CD4-positive, alpha-beta T cell (primary cell): ENCODE measurements at regions of chr2 and their contacts with region 1.

Region 1: GRCh38 chr2:113050921-113051895 is 1.5 kb downstream of the IL36B start:
- DNase-seq: no peak
- ATAC-seq: no peak
- H3K4me3 ChIP-seq: no peak overlapping the region
- H3K4me3 Mint-ChIP-seq: no peak overlapping the region
- H3K27ac ChIP-seq: no peak overlapping the region
- H3K27ac Mint-ChIP-seq: no peak overlapping the region
- H3K4me1 ChIP-seq: no peaks in the 10 kb centered on the region
- H3K4me1 Mint-ChIP-seq: no peaks in the 10 kb centered on the region
- H3K27me3 ChIP-seq: no peaks in the 10 kb centered on the region
- H3K27me3 Mint-ChIP-seq: no peaks in the 10 kb centered on the region
- CTCF ChIP-seq: no peak

Region 2: GRCh38 chr2:112972423-112973086 is 78.7 kb before region 1 on chr2:
- CTCF ChIA-PET with region 1: no interaction called
- POLR2A ChIA-PET with region 1: no interaction called
- intact Hi-C with region 1: no loop called
- DNase-seq: no peak
- ATAC-seq: no peak
- H3K4me3 ChIP-seq: no peak overlapping the region
- H3K4me3 Mint-ChIP-seq: no peak overlapping the region
- H3K27ac ChIP-seq: no peak overlapping the region
- H3K27ac Mint-ChIP-seq: no peak overlapping the region
- H3K4me1 ChIP-seq: peaks cover 6% of the 10 kb centered on the region
- H3K4me1 Mint-ChIP-seq: peaks cover 19% of the 10 kb centered on the region
- H3K27me3 ChIP-seq: no peaks in the 10 kb centered on the region
- H3K27me3 Mint-ChIP-seq: no peaks in the 10 kb centered on the region
- CTCF ChIP-seq: no peak

Region 3: DNA sequence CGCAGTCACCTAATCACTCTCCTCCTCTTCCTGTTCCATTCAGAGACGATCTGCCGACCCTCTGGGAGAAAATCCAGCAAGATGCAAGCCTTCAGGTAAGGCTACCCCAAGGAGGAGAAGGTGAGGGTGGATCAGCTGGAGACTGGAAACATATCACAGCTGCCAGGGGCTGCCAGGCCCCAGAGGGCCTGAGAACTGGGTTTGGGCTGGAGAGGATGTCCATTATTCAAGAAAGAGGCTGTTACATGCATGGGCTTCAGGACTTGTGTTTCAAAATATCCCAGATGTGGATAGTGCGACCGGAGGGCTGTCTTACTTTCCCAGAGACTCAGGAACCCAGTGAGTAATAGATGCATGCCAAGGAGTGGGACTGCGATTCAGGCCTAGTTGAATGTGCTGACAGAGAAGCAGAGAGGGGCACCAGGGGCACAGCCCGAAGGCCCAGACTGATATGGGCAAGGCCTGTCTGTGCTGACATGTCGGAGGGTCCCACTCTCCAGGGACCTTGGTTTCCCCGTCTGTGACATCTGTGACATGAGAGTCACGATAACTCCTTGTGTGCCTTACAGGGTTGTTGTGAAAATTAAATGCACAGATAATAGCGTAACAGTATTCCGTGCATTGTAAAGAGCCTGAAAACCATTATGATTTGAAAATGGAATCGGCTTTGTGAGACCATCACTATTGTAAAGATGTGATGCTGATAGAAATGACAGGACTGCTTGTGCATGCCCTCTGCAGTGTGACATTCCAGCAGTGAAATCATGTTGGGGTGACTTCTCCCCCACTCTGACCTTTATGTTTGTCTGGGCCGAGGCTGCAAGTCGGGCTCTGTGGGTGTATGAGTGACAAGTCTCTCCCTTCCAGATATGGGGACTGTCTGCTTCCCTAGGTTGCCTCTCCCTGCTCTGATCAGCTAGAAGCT is 76.7 kb after region 1 on chr2:
- CTCF ChIA-PET with region 1: no interaction called
- POLR2A ChIA-PET with region 1: no interaction called
- intact Hi-C with region 1: loop called in 1 of 2 experiments (anchors 2 kb)
- DNase-seq: no peak
- ATAC-seq: no peak
- H3K4me3 ChIP-seq: peak overlapping the region; percentile 34
- H3K4me3 Mint-ChIP-seq: no peak overlapping the region
- H3K27ac ChIP-seq: no peak overlapping the region
- H3K27ac Mint-ChIP-seq: no peak overlapping the region
- H3K4me1 ChIP-seq: peaks cover 10% of the 10 kb centered on the region
- H3K4me1 Mint-ChIP-seq: no peaks in the 10 kb centered on the region
- H3K27me3 ChIP-seq: no peaks in the 10 kb centered on the region
- H3K27me3 Mint-ChIP-seq: peaks cover 21% of the 10 kb centered on the region
- CTCF ChIP-seq: no peak